CD4-positive, alpha-beta memory T cell (primary cell): ENCODE measurements at regions of chr3 and their contacts with region 1.

Region 1: DNA sequence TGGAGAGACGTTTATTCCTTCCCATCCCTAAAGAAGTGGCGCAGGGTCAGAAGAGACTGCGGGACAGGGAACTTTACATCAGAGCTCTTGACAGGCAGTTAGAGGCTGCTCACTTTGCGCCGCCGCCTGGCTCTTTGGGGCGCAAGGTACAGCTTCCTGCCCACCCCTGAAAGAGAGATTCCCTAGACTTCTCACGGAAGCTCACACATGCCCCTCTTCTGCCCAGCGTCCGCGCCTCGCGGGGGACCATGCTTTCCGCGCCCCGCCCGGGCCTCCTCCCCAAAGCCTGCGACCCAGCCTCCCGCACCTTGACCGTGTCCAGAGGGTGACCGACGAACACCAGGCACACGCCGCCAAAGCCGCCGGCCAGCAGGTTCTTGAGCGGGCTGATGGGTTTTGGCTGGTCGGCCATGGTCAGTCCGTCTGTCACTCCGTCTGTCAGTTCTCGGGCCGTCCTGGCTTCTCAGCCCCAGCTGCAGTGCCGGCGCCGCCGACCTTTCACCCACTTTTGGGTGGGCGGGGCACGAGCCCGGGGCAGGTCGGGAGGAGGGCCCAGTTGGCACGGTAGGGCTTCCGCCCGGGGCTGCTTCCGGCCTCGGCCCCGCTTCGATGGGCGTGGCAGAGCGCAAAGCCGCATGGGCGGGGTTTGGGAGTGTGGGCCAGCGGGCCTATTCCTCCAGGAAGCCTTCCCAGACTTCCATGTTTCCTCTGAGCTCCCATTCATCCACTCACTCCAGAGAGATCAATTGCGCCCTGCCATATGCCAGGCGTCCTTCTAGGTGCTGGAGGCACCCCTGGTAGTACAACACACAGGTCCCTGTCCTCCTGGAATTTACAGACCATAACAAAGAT is at the start of gene SLC25A20:
- DNase-seq: peak; percentile 85 to 89 (median 86)
- H3K4me3 ChIP-seq: peak within 1 kb of the TSS; percentile 76 to 98
- H3K4me3 Mint-ChIP-seq: peak within 1 kb of the TSS; percentile 91 to 97 (median 96)
- H3K27ac ChIP-seq: peak within 1 kb of the TSS; percentile 76
- H3K27ac Mint-ChIP-seq: peak within 1 kb of the TSS; percentile 71 to 97 (median 96)
- H3K4me1 ChIP-seq: peaks cover 39% of the 10 kb centered on the region
- H3K4me1 Mint-ChIP-seq: peaks cover 23 to 61% (median 39%) of the 10 kb centered on the region in 4 donors
- H3K27me3 ChIP-seq: no peaks in the 10 kb centered on the region
- H3K27me3 Mint-ChIP-seq: no peaks in the 10 kb centered on the region
- total RNA-seq, gene SLC25A20: 12.7 to 19.2 TPM

Region 2: DNA sequence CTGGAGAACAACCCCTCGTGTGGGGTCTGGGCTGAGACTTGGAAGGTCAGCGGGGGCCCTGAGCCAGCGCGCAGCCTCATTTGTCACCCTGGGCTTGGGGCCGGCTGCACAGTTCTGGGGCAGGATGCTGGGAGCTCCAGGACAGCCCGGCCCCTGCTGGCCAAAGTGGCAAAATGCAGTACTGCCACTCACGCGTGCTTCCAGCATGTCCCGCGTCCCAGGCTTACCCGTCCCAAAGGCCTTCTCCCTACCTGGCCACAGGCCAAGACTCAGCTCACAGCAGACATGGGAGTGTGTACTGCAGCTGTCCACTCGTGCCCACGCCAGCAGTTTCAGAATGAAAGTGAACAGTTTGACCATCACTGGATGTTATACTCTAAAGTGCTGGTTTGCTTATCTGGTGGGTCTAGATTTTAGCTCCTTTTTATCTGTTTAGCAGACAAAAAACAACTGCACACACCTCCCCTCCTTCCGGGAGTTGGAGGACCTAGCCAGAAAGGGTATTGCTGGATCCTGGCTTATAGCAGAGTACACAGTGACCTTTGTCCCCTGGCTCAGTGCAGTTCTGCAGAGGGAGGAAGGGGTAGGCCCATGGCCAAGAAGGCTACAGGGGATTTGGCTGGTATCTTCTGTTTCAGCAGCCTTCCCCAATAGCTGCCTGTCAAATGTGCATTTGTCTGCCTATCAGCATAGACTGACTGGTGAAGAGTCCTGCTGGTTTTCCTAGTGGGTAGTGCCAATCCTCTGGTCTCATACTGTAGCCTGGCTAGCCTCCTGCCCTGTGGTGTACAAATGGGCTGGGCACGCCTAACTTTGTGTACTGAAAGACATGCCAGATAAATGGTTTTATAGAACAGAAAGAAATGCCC is 158.4 kb before region 1 on chr3:
- CTCF ChIA-PET with region 1: interaction called, 16 read pairs
- POLR2A ChIA-PET with region 1: interaction called, 3 read pairs
- intact Hi-C with region 1: loop called (anchors 1 kb)
- DNase-seq: peak; percentile 25 to 43 (median 37)
- H3K4me3 ChIP-seq: no peak overlapping the region
- H3K4me3 Mint-ChIP-seq: no peak overlapping the region
- H3K27ac ChIP-seq: no peak overlapping the region
- H3K27ac Mint-ChIP-seq: peak overlapping the region in 1 of 7 donors; percentile 23
- H3K4me1 ChIP-seq: no peaks in the 10 kb centered on the region
- H3K4me1 Mint-ChIP-seq: peaks cover 0 to 10% (median 2%) of the 10 kb centered on the region in 4 donors
- H3K27me3 ChIP-seq: no peaks in the 10 kb centered on the region
- H3K27me3 Mint-ChIP-seq: no peaks in the 10 kb centered on the region

Region 3: GRCh38 chr3:48811524-48811923 is 87.1 kb before region 1 on chr3:
- CTCF ChIA-PET with region 1: no interaction called
- POLR2A ChIA-PET with region 1: interaction called, 10 read pairs
- intact Hi-C with region 1: loop called (anchors 1 kb)
- DNase-seq: no peak
- H3K4me3 ChIP-seq: no peak overlapping the region
- H3K4me3 Mint-ChIP-seq: peak overlapping the region in 4 of 8 donors; percentile 4 to 55 (median 12)
- H3K27ac ChIP-seq: peak overlapping the region; percentile 21
- H3K27ac Mint-ChIP-seq: peak overlapping the region; percentile 62 to 95 (median 92)
- H3K4me1 ChIP-seq: peaks cover 32% of the 10 kb centered on the region
- H3K4me1 Mint-ChIP-seq: peaks cover 19 to 38% (median 29%) of the 10 kb centered on the region in 4 donors
- H3K27me3 ChIP-seq: no peaks in the 10 kb centered on the region
- H3K27me3 Mint-ChIP-seq: no peaks in the 10 kb centered on the region

Region 4: DNA sequence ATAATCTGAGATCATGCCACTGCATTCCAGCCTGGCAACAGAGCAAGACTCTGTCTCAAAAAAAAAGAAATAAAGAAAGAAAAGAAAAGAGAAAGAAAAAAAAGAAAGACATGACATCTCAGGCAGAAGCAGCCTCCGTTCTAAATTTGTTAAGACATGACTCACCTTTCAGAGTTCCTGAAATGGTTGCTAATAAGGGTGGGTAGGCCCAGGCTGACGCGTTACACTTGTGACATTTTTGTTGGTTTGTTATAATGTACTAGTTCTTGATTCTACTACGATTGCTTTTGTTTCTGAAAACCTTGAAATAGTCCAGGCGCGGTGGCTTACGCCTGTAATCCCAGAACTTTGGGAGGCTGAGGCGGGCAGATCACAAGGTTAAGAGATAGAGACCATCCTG is 20.9 kb before region 1 on chr3:
- CTCF ChIA-PET with region 1: no interaction called
- POLR2A ChIA-PET with region 1: no interaction called
- intact Hi-C with region 1: no loop called
- DNase-seq: no peak
- H3K4me3 ChIP-seq: no peak overlapping the region
- H3K4me3 Mint-ChIP-seq: no peak overlapping the region
- H3K27ac ChIP-seq: no peak overlapping the region
- H3K27ac Mint-ChIP-seq: no peak overlapping the region
- H3K4me1 ChIP-seq: no peaks in the 10 kb centered on the region
- H3K4me1 Mint-ChIP-seq: peaks cover 0 to 5% (median 4%) of the 10 kb centered on the region in 4 donors
- H3K27me3 ChIP-seq: no peaks in the 10 kb centered on the region
- H3K27me3 Mint-ChIP-seq: no peaks in the 10 kb centered on the region

Region 5: GRCh38 chr3:48918388-48919214 is 20.0 kb after region 1 on chr3 and contains the start of gene ARIH2:
- CTCF ChIA-PET with region 1: interaction called, 45 read pairs
- POLR2A ChIA-PET with region 1: interaction called, 93 read pairs
- intact Hi-C with region 1: loop called (anchors 1 kb)
- DNase-seq: peak; percentile 87 to 90 (median 88)
- H3K4me3 ChIP-seq: peak within 1 kb of the TSS; percentile 81 to 96
- H3K4me3 Mint-ChIP-seq: peak within 1 kb of the TSS; percentile 89 to 97 (median 95)
- H3K27ac ChIP-seq: peak within 1 kb of the TSS; percentile 93
- H3K27ac Mint-ChIP-seq: peak within 1 kb of the TSS; percentile 97 to 100 (median 98)
- H3K4me1 ChIP-seq: peaks cover 29% of the 10 kb centered on the region
- H3K4me1 Mint-ChIP-seq: peaks cover 11 to 37% (median 23%) of the 10 kb centered on the region in 4 donors
- H3K27me3 ChIP-seq: no peaks in the 10 kb centered on the region
- H3K27me3 Mint-ChIP-seq: no peaks in the 10 kb centered on the region
- total RNA-seq, gene ARIH2: 141 to 149 TPM

Region 6: DNA sequence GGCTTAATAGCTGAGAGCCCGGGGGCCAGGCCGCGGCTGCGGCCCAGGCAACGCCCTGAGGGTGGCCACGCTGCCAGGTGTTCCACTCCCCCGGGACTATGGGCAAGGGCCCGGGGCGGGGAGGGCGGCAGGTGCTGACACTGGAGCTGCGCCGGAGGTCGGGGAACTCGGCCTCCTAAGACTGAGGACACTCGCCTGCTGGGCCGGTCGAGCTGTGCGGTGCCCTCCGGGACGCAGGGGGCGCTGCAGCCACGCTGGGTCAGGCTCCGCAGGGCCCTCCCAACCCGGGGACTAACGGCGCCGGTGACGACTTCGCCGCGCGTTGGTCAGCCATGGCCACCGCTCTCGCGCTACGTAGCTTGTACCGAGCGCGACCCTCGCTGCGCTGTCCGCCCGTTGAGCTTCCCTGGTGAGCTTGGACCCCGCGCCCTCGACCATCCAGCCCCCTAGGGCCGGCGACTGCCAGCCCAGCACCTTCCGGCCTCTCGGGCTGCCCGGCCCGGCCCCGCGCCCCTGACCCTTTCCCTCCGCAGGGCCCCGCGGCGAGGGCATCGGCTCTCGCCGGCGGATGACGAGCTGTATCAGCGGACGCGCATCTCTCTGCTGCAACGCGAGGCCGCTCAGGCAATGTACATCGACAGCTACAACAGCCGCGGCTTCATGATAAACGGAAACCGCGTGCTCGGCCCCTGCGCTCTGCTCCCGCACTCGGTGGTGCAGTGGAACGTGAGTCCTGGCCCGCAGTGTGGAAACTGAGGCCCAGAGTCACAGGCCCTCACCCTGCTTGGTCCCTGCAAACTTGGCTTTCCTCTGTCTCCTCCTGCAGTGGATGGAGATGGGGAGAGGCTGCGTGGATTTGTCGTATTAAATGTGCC is 123.4 kb after region 1 on chr3 and contains the start of gene NDUFAF3:
- CTCF ChIA-PET with region 1: no interaction called
- POLR2A ChIA-PET with region 1: interaction called, 5 read pairs
- intact Hi-C with region 1: loop called (anchors 5 kb)
- DNase-seq: peak; percentile 89 to 91 (median 90)
- H3K4me3 ChIP-seq: peak within 1 kb of the TSS; percentile 65 to 98
- H3K4me3 Mint-ChIP-seq: peak within 1 kb of the TSS; percentile 94 to 98 (median 96)
- H3K27ac ChIP-seq: peak within 1 kb of the TSS; percentile 97
- H3K27ac Mint-ChIP-seq: peak within 1 kb of the TSS; percentile 93 to 99 (median 98)
- H3K4me1 ChIP-seq: peaks cover 43% of the 10 kb centered on the region
- H3K4me1 Mint-ChIP-seq: peaks cover 16 to 74% (median 41%) of the 10 kb centered on the region in 4 donors
- H3K27me3 ChIP-seq: no peaks in the 10 kb centered on the region
- H3K27me3 Mint-ChIP-seq: no peaks in the 10 kb centered on the region
- total RNA-seq, gene NDUFAF3: 77.9 to 85.7 TPM

Region 7: GRCh38 chr3:49656541-49657112 is 758.0 kb after region 1 on chr3:
- CTCF ChIA-PET with region 1: no interaction called
- POLR2A ChIA-PET with region 1: no interaction called
- intact Hi-C with region 1: no loop called
- DNase-seq: no peak
- H3K4me3 ChIP-seq: no peak overlapping the region
- H3K4me3 Mint-ChIP-seq: no peak overlapping the region
- H3K27ac ChIP-seq: no peak overlapping the region
- H3K27ac Mint-ChIP-seq: no peak overlapping the region
- H3K4me1 ChIP-seq: no peaks in the 10 kb centered on the region
- H3K4me1 Mint-ChIP-seq: no peaks in the 10 kb centered on the region
- H3K27me3 ChIP-seq: no peaks in the 10 kb centered on the region
- H3K27me3 Mint-ChIP-seq: peaks cover 0 to 5% of the 10 kb centered on the region in 2 donors